Gastrocnemius medialis (tissue), 4 donors: ENCODE measurements at regions of chr6 and their contacts with region 1.

Region 1: DNA sequence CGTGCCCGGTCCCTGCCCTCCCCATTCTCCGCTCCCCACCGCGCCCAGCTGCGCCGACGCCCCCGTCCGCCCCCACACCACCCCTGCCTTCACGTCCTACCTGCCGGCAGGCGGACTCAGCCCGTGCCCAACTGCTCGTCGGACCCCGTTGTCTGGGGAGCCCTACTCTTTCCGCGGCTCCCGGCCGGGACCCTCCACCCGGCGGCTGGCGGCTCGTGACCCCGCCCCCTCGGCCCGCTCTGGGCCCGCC is at the start of gene SERAC1:
- DNase-seq: no peak
- ATAC-seq: peak; percentile 82 to 83
- H3K4me3 ChIP-seq: peak within 1 kb of the TSS; percentile 73 to 94 (median 84)
- H3K27ac ChIP-seq: peak within 1 kb of the TSS; percentile 93 to 98 (median 96)
- H3K4me1 ChIP-seq: peaks cover 25 to 32% of the 10 kb centered on the region in 2 donors
- H3K27me3 ChIP-seq: no peaks in the 10 kb centered on the region
- CTCF ChIP-seq: peak in 1 of 5 experiments; percentile 6
- POLR2A ChIP-seq: no peak
- total RNA-seq, gene SERAC1: 8.1 to 15.5 (median 11.5) TPM

Region 2: GRCh38 chr6:157830354-157831017 is 337.5 kb before region 1 on chr6:
- in situ Hi-C with region 1: no loop called
- intact Hi-C with region 1: loop called (anchors 10 kb)
- DNase-seq: no peak
- ATAC-seq: no peak
- H3K4me3 ChIP-seq: no peak overlapping the region
- H3K27ac ChIP-seq: no peak overlapping the region
- H3K4me1 ChIP-seq: peaks cover 36 to 44% of the 10 kb centered on the region in 2 donors
- H3K27me3 ChIP-seq: no peaks in the 10 kb centered on the region
- CTCF ChIP-seq: no peak
- POLR2A ChIP-seq: no peak

Region 3: GRCh38 chr6:158225767-158226166 is 57.8 kb after region 1 on chr6:
- in situ Hi-C with region 1: no loop called
- intact Hi-C with region 1: no loop called
- DNase-seq: no peak
- ATAC-seq: no peak
- H3K4me3 ChIP-seq: no peak overlapping the region
- H3K27ac ChIP-seq: no peak overlapping the region
- H3K4me1 ChIP-seq: no peaks in the 10 kb centered on the region
- H3K27me3 ChIP-seq: no peaks in the 10 kb centered on the region
- CTCF ChIP-seq: no peak
- POLR2A ChIP-seq: no peak